ENCODE measurements at regions of chr2 and their contacts with region 1.

Region 1: GRCh38 chr2:212414767-212415211 is 123.8 kb downstream of the ERBB4 start:
- DNase-seq: no peak
- ATAC-seq: no peak
- H3K4me3 ChIP-seq: no peak overlapping the region
- H3K27ac ChIP-seq: no peak overlapping the region
- H3K4me1 ChIP-seq: no peaks in the 10 kb centered on the region
- H3K27me3 ChIP-seq: no peaks in the 10 kb centered on the region
- CTCF ChIP-seq: no peak
- POLR2A ChIP-seq: no peak
- RAD21 ChIP-seq: no peak

Region 2: GRCh38 chr2:212364112-212364985 is 50.4 kb before region 1 on chr2:
- CTCF ChIA-PET with region 1: no interaction called
- POLR2A ChIA-PET with region 1: no interaction called
- dilution Hi-C with region 1: no loop called
- in situ Hi-C with region 1: no loop called
- intact Hi-C with region 1: loop called (anchors 5 kb)
- DNase-seq: no peak
- ATAC-seq: no peak
- H3K4me3 ChIP-seq: no peak overlapping the region
- H3K27ac ChIP-seq: no peak overlapping the region
- H3K4me1 ChIP-seq: no peaks in the 10 kb centered on the region
- H3K27me3 ChIP-seq: no peaks in the 10 kb centered on the region
- CTCF ChIP-seq: no peak
- POLR2A ChIP-seq: no peak
- RAD21 ChIP-seq: no peak

Measured in IMR-90 (cell line).